Activated CD4-positive, alpha-beta T cell treated with anti-CD3 and anti-CD28 coated beads for 36 hours (primary cell): ENCODE measurements at regions of chr20 and their contacts with region 1.

Region 1: GRCh38 chr20:58481481-58482021 is 33.6 kb downstream of the APCDD1L start:
- DNase-seq: peak; percentile 82
- ATAC-seq: peak; percentile 78
- H3K4me3 Mint-ChIP-seq: no peak overlapping the region
- H3K27ac Mint-ChIP-seq: no peak overlapping the region
- H3K4me1 Mint-ChIP-seq: no peaks in the 10 kb centered on the region
- H3K27me3 Mint-ChIP-seq: peaks cover 15% of the 10 kb centered on the region

Region 2: DNA sequence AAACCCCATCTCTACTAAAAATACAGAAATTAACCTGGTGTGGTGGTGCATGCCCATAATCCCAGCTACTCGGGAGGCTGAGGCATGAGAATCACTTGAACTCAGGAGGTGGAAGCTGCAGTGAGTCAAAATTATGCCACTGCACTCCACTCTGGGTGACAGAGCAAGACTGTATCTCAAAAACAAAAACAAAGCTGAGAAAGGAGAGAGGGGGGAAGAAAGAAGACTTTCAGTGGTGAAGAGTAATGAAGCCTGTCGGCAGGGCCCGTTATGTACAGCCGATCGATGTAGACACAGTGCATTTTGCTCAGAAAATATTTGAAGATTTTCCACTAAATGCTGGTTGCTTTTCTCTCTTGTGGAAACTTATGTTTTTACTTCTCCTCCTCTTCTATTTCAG is 78.7 kb before region 1 on chr20:
- CTCF ChIA-PET with region 1: no interaction called
- POLR2A ChIA-PET with region 1: no interaction called
- intact Hi-C with region 1: no loop called
- DNase-seq: no peak
- ATAC-seq: peak; percentile 21
- H3K4me3 Mint-ChIP-seq: no peak overlapping the region
- H3K27ac Mint-ChIP-seq: no peak overlapping the region
- H3K4me1 Mint-ChIP-seq: peaks cover 30% of the 10 kb centered on the region
- H3K27me3 Mint-ChIP-seq: no peaks in the 10 kb centered on the region

Region 3: GRCh38 chr20:58692594-58693226 is 211.2 kb after region 1 on chr20 and contains the start of gene NPEPL1:
- CTCF ChIA-PET with region 1: interaction called, 3 read pairs
- POLR2A ChIA-PET with region 1: no interaction called
- intact Hi-C with region 1: loop called in 1 of 2 experiments (anchors 1 kb)
- DNase-seq: peak; percentile 82
- ATAC-seq: peak; percentile 99
- H3K4me3 Mint-ChIP-seq: peak within 1 kb of the TSS; percentile 63
- H3K27ac Mint-ChIP-seq: peak within 1 kb of the TSS; percentile 53
- H3K4me1 Mint-ChIP-seq: peaks cover 13% of the 10 kb centered on the region
- H3K27me3 Mint-ChIP-seq: no peaks in the 10 kb centered on the region
- total RNA-seq, gene NPEPL1: 13.6 to 15.2 TPM

Region 4: DNA sequence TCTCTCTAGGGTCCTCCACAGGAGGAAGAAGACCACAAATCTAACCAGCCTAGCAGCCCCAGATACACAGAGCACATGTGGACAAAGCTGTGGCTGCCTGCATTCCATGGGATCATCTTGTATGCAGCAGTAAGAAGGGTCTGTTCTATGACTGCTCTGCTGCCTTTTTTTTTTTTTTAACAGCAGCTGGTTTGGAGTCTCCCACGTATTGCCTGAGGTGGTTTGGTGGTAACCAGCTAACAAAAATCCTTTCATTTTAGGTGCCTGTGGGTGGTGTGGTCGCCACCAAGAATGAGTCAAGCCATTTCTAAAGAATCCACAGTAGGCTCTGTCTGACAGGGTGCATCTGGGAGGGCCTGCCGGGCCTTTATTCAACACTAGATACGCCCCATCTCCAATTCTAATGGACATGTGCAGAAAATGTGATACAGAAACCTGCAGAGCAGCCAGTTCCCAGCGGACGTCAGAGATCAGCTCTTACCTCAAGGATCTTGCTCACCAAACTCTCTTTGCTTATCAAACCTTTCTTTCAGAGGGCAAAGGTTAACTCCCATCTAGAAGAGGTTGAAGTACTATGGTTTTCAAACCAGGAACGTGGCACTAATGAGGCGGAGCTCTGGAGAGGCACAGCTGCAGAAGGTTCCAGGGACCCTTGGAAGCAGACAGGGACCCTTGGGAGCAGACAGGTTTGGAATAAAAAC is 337.2 kb after region 1 on chr20:
- CTCF ChIA-PET with region 1: no interaction called
- POLR2A ChIA-PET with region 1: no interaction called
- intact Hi-C with region 1: loop called in 1 of 2 experiments (anchors 10 kb)
- DNase-seq: peak; percentile 91
- ATAC-seq: peak; percentile 97
- H3K4me3 Mint-ChIP-seq: no peak overlapping the region
- H3K27ac Mint-ChIP-seq: no peak overlapping the region
- H3K4me1 Mint-ChIP-seq: peaks cover 16% of the 10 kb centered on the region
- H3K27me3 Mint-ChIP-seq: peaks cover 24% of the 10 kb centered on the region

Region 5: DNA sequence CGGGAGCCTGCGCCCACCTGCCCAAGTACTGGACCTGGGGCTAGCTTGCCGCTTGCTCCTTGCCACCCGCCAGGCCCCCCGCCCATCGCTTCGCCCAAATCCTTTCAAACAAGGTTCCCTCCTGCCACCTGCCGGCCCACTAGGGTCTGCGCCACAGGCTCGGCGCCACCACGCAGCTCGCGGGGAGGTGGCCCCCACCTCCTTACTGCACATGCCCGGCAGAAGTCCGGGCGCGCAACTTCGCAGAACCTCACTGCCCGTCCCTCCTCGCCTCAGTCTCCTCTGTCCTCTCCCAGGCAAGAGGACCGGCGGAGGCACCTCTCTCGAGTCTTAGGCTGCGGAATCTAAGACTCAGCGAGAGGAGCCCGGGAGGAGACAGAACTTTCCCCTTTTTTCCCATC is 357.9 kb after region 1 on chr20:
- CTCF ChIA-PET with region 1: interaction called, 11 read pairs
- POLR2A ChIA-PET with region 1: no interaction called
- intact Hi-C with region 1: loop called in 1 of 2 experiments (anchors 1 kb)
- DNase-seq: peak; percentile 75
- ATAC-seq: peak; percentile 58
- H3K4me3 Mint-ChIP-seq: no peak overlapping the region
- H3K27ac Mint-ChIP-seq: no peak overlapping the region
- H3K4me1 Mint-ChIP-seq: peaks cover 8% of the 10 kb centered on the region
- H3K27me3 Mint-ChIP-seq: peaks cover 44% of the 10 kb centered on the region

Region 6: DNA sequence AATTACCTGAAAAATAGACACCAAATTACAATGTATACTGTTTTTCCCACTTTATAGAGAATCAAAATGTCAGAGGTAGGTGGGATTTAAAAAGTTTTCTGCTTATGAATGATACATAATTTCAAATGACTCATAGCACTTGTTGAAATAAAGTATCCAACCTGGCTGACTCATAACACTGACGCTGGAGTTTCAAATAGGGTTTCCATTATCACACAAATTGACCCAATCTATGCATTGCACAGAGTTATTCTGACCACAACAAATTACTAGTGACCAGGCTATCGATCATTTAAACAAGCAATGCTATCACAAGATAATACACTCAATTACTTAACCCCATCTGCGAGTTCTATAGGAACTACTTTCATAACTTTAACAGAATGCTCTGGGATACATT is 592.9 kb after region 1 on chr20:
- CTCF ChIA-PET with region 1: no interaction called
- POLR2A ChIA-PET with region 1: no interaction called
- intact Hi-C with region 1: loop called in 1 of 2 experiments (anchors 10 kb)
- DNase-seq: peak; percentile 31
- ATAC-seq: peak; percentile 79
- H3K4me3 Mint-ChIP-seq: no peak overlapping the region
- H3K27ac Mint-ChIP-seq: no peak overlapping the region
- H3K4me1 Mint-ChIP-seq: peaks cover 52% of the 10 kb centered on the region
- H3K27me3 Mint-ChIP-seq: peaks cover 18% of the 10 kb centered on the region